ENCODE measurements at regions of chr6 and their contacts with region 1.

Region 1: DNA sequence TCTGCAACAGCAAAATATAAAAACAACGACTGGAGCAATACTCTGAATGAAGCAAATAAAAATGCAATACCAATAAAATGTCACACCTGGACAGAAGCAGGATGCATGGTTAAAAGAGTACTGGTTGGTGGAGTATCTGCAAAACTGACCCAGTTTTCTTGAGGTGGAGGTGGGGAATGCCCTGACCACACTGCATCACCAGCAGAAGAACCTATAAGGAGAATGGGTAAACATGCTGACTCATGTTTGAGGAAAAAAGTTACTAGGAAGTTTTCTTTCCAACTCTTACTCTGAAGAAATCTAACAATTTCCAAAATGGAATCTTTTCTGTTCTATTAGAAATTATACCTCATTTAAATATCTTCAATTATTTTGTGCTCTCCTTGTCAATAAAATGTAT is 43.6 kb downstream of the REPS1 start:
- DNase-seq: no peak
- ATAC-seq: no peak
- H3K4me3 ChIP-seq: no peak overlapping the region
- H3K27ac ChIP-seq: no peak overlapping the region
- H3K4me1 ChIP-seq: peaks cover 0 to 29% (median 13%) of the 10 kb centered on the region in 12 donors
- H3K27me3 ChIP-seq: no peaks in the 10 kb centered on the region
- CTCF ChIP-seq: no peak
- POLR2A ChIP-seq: no peak

Region 2: DNA sequence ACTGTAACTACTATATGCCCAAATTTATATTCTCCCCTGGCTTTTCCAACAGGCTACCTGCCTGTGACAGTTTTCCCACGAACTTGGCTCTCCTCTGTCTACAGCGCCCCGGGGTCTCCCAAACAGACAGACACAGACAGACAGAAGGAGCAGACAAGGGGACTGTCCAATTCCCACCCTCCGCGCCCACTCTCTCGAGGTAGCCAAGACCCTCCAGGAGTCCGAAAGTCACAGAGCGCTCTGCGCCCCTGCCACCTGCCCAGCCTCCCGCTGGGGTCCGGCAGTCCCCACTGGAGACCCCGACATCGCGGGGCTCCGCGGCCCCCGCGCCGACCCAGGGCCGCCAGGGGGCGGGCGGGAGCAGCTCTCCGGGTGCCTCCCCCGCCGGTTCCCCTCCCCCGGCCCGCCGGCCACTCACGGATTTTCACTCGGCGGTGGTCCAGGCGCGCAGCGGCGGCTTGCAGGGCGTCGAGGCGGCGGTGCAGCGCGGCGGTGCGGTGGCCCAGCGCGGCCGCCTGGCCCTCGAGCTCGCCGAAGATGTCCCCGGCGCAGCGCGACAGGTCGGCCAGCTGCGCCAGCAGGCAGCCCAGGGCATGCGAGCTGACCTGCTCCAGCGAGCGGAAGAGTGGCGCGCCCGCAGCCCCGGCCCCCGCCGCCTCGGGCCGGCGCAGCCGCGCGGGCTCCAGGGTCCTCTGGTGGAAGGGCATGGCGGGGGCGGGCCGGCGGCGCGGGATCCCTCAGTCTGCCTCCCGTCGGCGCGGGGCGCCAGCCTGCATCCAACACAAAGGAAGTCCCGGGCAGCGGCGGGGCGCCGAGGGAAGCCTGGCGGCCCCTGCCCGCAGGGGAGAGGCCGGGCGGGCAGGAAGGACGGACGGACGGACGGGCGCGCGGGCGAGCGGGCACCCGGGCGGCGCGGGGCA is 252.1 kb before region 1 on chr6:
- intact Hi-C with region 1: no loop called
- DNase-seq: peak; percentile 72 to 91 (median 82)
- ATAC-seq: peak; percentile 61 to 90 (median 82)
- H3K4me3 ChIP-seq: peak overlapping the region; percentile 36 to 91 (median 72)
- H3K27ac ChIP-seq: peak overlapping the region; percentile 50 to 82 (median 68)
- H3K4me1 ChIP-seq: peaks cover 0 to 19% (median 4%) of the 10 kb centered on the region in 12 donors
- H3K27me3 ChIP-seq: no peaks in the 10 kb centered on the region
- CTCF ChIP-seq: peak; percentile 72 to 97 (median 88)
- POLR2A ChIP-seq: no peak

Region 3: GRCh38 chr6:138869398-138869797 is 75.0 kb before region 1 on chr6:
- intact Hi-C with region 1: no loop called
- DNase-seq: peak; percentile 54 to 87 (median 68)
- ATAC-seq: peak; percentile 78 to 95 (median 88)
- H3K4me3 ChIP-seq: no peak overlapping the region
- H3K27ac ChIP-seq: peak overlapping the region; percentile 25 to 89 (median 78)
- H3K4me1 ChIP-seq: peaks cover 0 to 44% (median 14%) of the 10 kb centered on the region in 12 donors
- H3K27me3 ChIP-seq: no peaks in the 10 kb centered on the region
- CTCF ChIP-seq: no peak
- POLR2A ChIP-seq: no peak

Region 4: GRCh38 chr6:138957484-138957883 is 13.1 kb after region 1 on chr6:
- intact Hi-C with region 1: loop called in 1 of 10 experiments (anchors 2 kb)
- DNase-seq: no peak
- ATAC-seq: peak in 2 of 4 donors; percentile 54 to 56
- H3K4me3 ChIP-seq: no peak overlapping the region
- H3K27ac ChIP-seq: peak overlapping the region in 8 of 12 donors; percentile 2 to 63 (median 8)
- H3K4me1 ChIP-seq: peaks cover 0 to 57% (median 21%) of the 10 kb centered on the region in 12 donors
- H3K27me3 ChIP-seq: no peaks in the 10 kb centered on the region
- CTCF ChIP-seq: no peak
- POLR2A ChIP-seq: no peak

Region 5: DNA sequence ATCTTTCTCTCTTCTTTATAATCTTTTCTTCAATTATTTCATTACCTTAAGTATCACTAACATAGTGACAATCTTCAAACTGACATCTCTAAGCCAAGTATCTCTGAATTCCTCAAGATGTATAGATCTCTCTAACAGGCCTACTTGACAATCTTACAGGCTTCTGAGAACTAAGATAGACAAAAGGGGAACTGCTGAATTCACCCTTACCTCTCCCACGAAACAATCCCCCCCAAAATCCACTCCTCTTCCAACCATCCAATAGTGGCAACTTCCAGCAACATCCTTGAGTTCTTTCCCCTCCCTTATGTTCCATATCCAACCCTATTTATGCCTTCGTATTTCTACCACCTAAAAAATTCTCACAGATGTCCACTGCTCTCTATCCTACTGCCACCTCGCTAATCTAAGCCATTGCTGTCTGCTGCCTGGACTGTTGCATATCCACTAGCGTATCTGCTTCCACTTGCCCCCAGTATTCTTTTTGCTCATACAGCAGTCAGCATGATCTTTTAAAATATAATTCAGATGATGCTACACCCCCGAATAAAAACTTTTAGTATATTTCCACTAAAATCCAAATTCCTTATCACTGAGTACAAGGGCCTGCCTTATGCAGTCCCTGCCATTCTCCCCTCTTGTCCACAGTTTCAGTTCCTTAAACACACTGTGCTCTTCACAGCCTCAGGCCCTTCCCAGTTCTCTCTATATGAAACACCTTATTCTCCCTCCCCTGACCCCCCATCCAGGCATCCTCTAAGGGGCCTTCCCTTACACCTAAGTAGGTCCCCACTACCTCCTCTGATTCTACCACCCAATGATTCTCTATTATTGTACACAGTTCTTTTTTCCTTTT is 35.6 kb after region 1 on chr6:
- intact Hi-C with region 1: loop called in 2 of 10 experiments (anchors 5 kb)
- DNase-seq: no peak
- ATAC-seq: no peak
- H3K4me3 ChIP-seq: no peak overlapping the region
- H3K27ac ChIP-seq: no peak overlapping the region
- H3K4me1 ChIP-seq: peaks cover 0 to 62% (median 23%) of the 10 kb centered on the region in 12 donors
- H3K27me3 ChIP-seq: no peaks in the 10 kb centered on the region
- CTCF ChIP-seq: no peak
- POLR2A ChIP-seq: no peak

Region 6: GRCh38 chr6:138987640-138988468 is 43.4 kb after region 1 on chr6 and contains the start of gene REPS1:
- intact Hi-C with region 1: loop called in 2 of 10 experiments (anchors 5 kb)
- DNase-seq: peak; percentile 92 to 95 (median 94)
- ATAC-seq: peak; percentile 95 to 98 (median 98)
- H3K4me3 ChIP-seq: peak within 1 kb of the TSS; percentile 80 to 99 (median 90)
- H3K27ac ChIP-seq: peak within 1 kb of the TSS; percentile 80 to 96 (median 92)
- H3K4me1 ChIP-seq: peaks cover 0 to 42% (median 23%) of the 10 kb centered on the region in 12 donors
- H3K27me3 ChIP-seq: no peaks in the 10 kb centered on the region
- CTCF ChIP-seq: peak; percentile 98 to 100 (median 99)
- POLR2A ChIP-seq: peak in 1 of 2 donors; percentile 62
- total RNA-seq, gene REPS1: 35.2 to 48.2 (median 38.3) TPM